CD8-positive, alpha-beta memory T cell (primary cell): ENCODE measurements at regions of chr10 and their contacts with region 1.

Region 1: DNA sequence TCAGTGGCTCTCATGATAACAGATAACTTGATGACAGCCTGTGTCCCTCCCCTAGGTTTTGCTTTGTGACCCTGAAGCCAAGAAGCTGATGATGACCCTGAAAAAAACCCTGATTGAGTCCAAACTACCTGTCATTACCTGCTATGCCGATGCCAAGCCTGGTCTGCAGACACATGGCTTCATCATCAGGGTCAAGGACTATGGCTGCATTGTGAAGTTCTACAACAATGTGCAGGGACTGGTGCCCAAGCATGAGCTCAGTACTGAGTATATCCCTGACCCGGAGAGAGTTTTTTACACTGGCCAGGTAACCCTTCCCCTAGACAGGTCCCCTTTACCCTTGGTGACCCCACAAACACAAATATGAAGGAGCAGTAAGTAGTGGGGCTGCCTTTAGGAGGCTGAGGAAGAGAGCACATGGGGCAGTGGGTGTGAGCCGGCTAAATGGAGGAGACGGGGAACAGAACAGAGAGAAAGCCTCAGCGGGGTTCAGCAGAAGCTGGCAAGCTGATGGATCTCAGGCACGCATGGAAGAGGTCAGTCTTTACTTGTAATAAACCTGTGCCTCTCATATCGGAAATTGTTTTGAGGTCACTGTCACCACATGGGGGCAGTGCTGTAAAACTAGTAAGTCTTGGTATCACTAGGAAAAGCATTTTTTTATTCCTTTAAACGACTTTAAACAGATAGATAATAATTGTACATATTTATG is 20.2 kb downstream of the PDCD11 start:
- DNase-seq: peak; percentile 45 to 73 (median 51)
- H3K4me3 ChIP-seq: no peak overlapping the region
- H3K4me3 Mint-ChIP-seq: no peak overlapping the region
- H3K27ac ChIP-seq: no peak overlapping the region
- H3K27ac Mint-ChIP-seq: peak overlapping the region in 4 of 8 donors; percentile 17 to 85 (median 64)
- H3K4me1 ChIP-seq: no peaks in the 10 kb centered on the region
- H3K4me1 Mint-ChIP-seq: peaks cover 0 to 7% (median 0%) of the 10 kb centered on the region in 3 donors
- H3K27me3 ChIP-seq: no peaks in the 10 kb centered on the region
- H3K27me3 Mint-ChIP-seq: no peaks in the 10 kb centered on the region

Region 2: DNA sequence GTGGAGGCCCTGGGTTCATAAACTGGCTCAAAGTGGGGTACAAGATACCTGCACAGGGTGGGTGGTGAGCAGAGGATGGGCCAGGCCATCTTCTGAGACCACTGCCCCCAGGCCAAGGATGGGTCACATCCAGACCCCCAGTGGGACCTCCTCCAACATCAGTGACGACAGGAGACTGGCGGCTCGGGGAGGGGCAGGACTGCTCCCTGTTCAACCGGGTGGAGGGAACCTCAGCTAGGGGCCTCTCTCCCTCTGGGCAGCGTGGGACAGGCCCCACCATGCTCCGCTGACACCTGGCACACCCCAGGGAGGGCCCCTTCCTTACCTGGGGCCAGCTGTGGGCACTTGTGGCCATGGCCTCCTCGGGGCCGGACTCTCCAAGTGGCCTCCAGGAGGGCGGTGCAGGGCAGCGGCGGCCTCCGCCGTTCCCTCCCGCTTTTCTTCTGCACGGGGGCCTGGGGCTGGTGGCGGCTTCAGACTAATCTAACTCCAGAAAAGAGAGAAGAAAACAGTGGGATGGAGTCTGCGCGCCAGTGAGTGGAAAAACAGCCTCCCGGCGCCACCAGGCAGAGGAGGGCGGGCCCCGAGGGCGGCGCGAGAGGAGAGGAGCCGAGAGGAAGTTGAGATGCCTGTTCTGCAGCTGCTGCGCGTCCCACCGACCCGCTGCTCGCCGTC is 35.4 kb after region 1 on chr10 and contains the start of gene CALHM2:
- CTCF ChIA-PET with region 1: interaction called, 29 read pairs
- POLR2A ChIA-PET with region 1: interaction called, 4 read pairs
- DNase-seq: peak; percentile 31 to 66 (median 38)
- H3K4me3 ChIP-seq: peak within 1 kb of the TSS; percentile 78
- H3K4me3 Mint-ChIP-seq: peak within 1 kb of the TSS; percentile 81 to 98 (median 96)
- H3K27ac ChIP-seq: peak within 1 kb of the TSS; percentile 61
- H3K27ac Mint-ChIP-seq: peak within 1 kb of the TSS; percentile 87 to 99 (median 95)
- H3K4me1 ChIP-seq: peaks cover 30% of the 10 kb centered on the region
- H3K4me1 Mint-ChIP-seq: peaks cover 51 to 67% (median 51%) of the 10 kb centered on the region in 3 donors
- H3K27me3 ChIP-seq: no peaks in the 10 kb centered on the region
- H3K27me3 Mint-ChIP-seq: no peaks in the 10 kb centered on the region
- total RNA-seq, gene CALHM2: 20.4 to 22.2 TPM

Region 3: GRCh38 chr10:103470761-103471653 is 54.4 kb after region 1 on chr10:
- CTCF ChIA-PET with region 1: interaction called, 48 read pairs
- POLR2A ChIA-PET with region 1: no interaction called
- DNase-seq: peak; percentile 50 to 91 (median 65)
- H3K4me3 ChIP-seq: peak overlapping the region; percentile 37
- H3K4me3 Mint-ChIP-seq: peak overlapping the region; percentile 7 to 88 (median 80)
- H3K27ac ChIP-seq: peak overlapping the region; percentile 36
- H3K27ac Mint-ChIP-seq: peak overlapping the region; percentile 78 to 98 (median 94)
- H3K4me1 ChIP-seq: peaks cover 31% of the 10 kb centered on the region
- H3K4me1 Mint-ChIP-seq: peaks cover 45 to 73% (median 55%) of the 10 kb centered on the region in 3 donors
- H3K27me3 ChIP-seq: no peaks in the 10 kb centered on the region
- H3K27me3 Mint-ChIP-seq: no peaks in the 10 kb centered on the region

Region 4: DNA sequence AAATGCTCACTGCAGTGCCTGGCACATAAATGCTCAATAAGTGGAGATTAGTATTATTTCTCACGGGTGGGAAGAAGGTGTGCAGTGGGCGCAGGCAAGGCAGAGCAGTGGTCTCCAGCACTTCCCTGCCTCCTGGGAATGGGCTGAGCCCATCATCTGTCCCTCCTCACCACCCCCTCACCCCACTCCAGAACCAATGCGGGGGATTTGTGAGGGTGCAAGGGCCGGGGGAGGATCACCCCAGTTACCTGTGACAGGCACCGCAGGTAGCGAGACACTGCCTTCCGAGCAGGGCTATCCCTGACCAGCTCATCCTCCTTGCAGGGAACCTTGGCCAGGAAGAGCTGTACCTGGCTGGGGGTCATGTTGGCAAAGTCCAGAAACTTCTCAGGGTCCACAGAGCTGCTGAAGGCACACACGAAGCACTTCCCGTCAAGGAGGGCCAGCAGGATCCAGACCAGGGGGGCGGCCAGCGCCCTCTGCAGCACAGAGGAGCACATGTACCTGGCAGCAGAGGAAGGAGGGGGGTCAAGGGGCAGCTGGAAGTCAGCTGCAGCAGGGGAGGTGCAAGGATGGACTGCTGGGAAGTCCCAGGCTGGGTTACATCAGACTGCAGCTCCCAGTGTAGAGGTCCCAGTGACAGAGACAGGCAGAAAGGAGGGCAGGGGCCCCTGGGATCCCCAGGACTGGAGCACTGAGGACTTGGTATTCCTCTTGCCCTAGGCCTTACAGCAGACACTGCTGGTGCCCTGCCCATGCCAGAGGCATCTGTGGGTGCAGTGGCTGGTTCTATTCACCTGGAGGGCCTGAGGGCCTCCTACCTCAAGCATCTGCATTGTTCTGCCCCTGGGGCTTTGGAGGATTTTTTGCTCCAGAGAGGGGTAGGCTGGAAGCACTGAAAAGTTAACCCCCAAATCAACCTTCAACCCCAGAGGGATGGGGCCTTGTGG is 59.7 kb after region 1 on chr10:
- CTCF ChIA-PET with region 1: interaction called, 48 read pairs
- POLR2A ChIA-PET with region 1: no interaction called
- DNase-seq: no peak
- H3K4me3 ChIP-seq: no peak overlapping the region
- H3K4me3 Mint-ChIP-seq: no peak overlapping the region
- H3K27ac ChIP-seq: no peak overlapping the region
- H3K27ac Mint-ChIP-seq: peak overlapping the region in 1 of 8 donors; percentile 51
- H3K4me1 ChIP-seq: peaks cover 15% of the 10 kb centered on the region
- H3K4me1 Mint-ChIP-seq: peaks cover 19 to 35% (median 28%) of the 10 kb centered on the region in 3 donors
- H3K27me3 ChIP-seq: no peaks in the 10 kb centered on the region
- H3K27me3 Mint-ChIP-seq: no peaks in the 10 kb centered on the region

Region 5: GRCh38 chr10:103481974-103482531 is 65.5 kb after region 1 on chr10:
- CTCF ChIA-PET with region 1: interaction called, 203 read pairs
- POLR2A ChIA-PET with region 1: no interaction called
- DNase-seq: peak in 2 of 5 donors; percentile 58 to 59
- H3K4me3 ChIP-seq: no peak overlapping the region
- H3K4me3 Mint-ChIP-seq: no peak overlapping the region
- H3K27ac ChIP-seq: no peak overlapping the region
- H3K27ac Mint-ChIP-seq: peak overlapping the region in 1 of 8 donors; percentile 2
- H3K4me1 ChIP-seq: no peaks in the 10 kb centered on the region
- H3K4me1 Mint-ChIP-seq: peaks cover 8 to 11% (median 10%) of the 10 kb centered on the region in 3 donors
- H3K27me3 ChIP-seq: no peaks in the 10 kb centered on the region
- H3K27me3 Mint-ChIP-seq: no peaks in the 10 kb centered on the region